ENCODE measurements at regions of chr14 and their contacts with region 1.

Region 1: GRCh38 chr14:22221508-22221907 is 367.5 kb downstream of the DAD1 start:
- DNase-seq: no peak
- H3K4me3 ChIP-seq: no peak overlapping the region
- H3K27ac ChIP-seq: no peak overlapping the region
- H3K4me1 ChIP-seq: no peaks in the 10 kb centered on the region
- H3K27me3 ChIP-seq: no peaks in the 10 kb centered on the region
- CTCF ChIP-seq: peak in 1 of 3 experiments; percentile 38; a peak in 2 of 4 replicates
- EP300 ChIP-seq: no peak
- POLR2A ChIP-seq: no peak
- RAD21 ChIP-seq: peak in 1 of 2 experiments; percentile 14; a peak in 1 of 4 replicates

Region 2: DNA sequence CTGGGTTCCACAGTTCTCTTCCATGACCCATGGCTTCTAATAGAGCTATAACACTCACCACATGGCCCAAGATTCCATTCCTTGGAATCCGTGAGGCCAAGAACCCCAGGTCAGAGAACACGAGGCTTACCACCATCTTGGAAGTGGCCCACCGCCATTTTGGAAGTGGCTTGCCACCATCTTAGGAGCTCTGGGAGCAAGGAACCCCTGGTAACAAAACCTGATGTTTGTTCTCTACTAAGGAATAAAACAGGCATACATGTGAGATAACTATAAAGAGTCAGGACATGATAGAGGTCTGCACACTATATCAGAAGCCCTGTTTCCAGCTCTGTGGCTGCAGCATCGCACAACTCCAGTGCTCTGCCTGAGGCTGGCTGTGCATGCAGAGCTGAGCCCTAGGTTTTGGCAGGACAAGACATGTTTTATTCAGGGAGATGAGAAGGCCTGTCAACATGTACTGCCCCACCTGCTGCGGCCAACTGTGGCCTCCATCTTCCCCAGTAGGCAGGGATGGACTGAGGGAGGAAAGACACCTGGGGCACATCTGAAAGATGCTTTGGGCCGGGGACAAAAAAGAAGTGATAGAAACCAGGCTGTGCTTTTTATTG is 22.6 kb after region 1 on chr14:
- CTCF ChIA-PET with region 1: interaction called, 12 read pairs
- POLR2A ChIA-PET with region 1: no interaction called
- DNase-seq: no peak
- H3K4me3 ChIP-seq: no peak overlapping the region
- H3K27ac ChIP-seq: no peak overlapping the region
- H3K4me1 ChIP-seq: peaks cover 0 to 3% (median 3%) of the 10 kb centered on the region in 4 experiments; a peak in 4 of 7 replicates
- H3K27me3 ChIP-seq: no peaks in the 10 kb centered on the region
- CTCF ChIP-seq: no peak
- EP300 ChIP-seq: no peak
- POLR2A ChIP-seq: no peak
- RAD21 ChIP-seq: no peak

Region 3: GRCh38 chr14:22375321-22375930 is 153.9 kb after region 1 on chr14:
- CTCF ChIA-PET with region 1: interaction called, 15 read pairs
- POLR2A ChIA-PET with region 1: no interaction called
- DNase-seq: no peak
- H3K4me3 ChIP-seq: no peak overlapping the region
- H3K27ac ChIP-seq: no peak overlapping the region
- H3K4me1 ChIP-seq: no peaks in the 10 kb centered on the region
- H3K27me3 ChIP-seq: no peaks in the 10 kb centered on the region
- CTCF ChIP-seq: peak in 2 of 3 experiments; percentile 51 to 55; a peak in 2 of 4 replicates
- EP300 ChIP-seq: no peak
- POLR2A ChIP-seq: no peak
- RAD21 ChIP-seq: peak; percentile 68 to 74